ENCODE measurements at regions of chr3 and their contacts with region 1.

Region 1: DNA sequence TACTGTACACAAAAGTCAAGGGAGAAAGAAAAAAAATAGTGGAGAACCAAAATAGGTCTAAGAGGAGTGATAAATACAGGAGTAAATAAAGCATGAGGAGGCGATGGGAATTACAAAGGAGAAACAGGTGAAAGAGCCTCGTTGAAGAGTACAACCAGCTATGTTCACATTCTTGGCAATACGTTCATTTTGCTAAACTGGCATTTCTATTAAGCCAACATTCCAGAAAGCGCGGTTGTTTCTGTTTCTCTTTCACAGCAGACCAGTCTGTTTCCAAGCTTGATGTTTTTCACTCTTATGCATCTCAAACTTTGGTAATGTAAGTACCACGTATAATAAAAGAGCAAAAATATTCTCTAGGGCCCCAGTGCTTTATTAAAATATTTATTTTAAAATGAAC is 74.5 kb downstream of the NSUN3 start:
- DNase-seq: no peak
- H3K4me3 ChIP-seq: no peak overlapping the region
- H3K27ac ChIP-seq: no peak overlapping the region
- H3K27me3 ChIP-seq: no peaks in the 10 kb centered on the region
- CTCF ChIP-seq: no peak

Region 2: GRCh38 chr3:94083261-94083660 is 54.1 kb before region 1 on chr3:
- CTCF ChIA-PET with region 1: no interaction called
- POLR2A ChIA-PET with region 1: no interaction called
- DNase-seq: no peak
- H3K4me3 ChIP-seq: no peak overlapping the region
- H3K27ac ChIP-seq: no peak overlapping the region
- H3K27me3 ChIP-seq: no peaks in the 10 kb centered on the region
- CTCF ChIP-seq: no peak

Region 3: GRCh38 chr3:94206291-94206690 is 68.9 kb after region 1 on chr3:
- CTCF ChIA-PET with region 1: interaction called, 11 read pairs
- POLR2A ChIA-PET with region 1: no interaction called
- DNase-seq: no peak
- H3K4me3 ChIP-seq: no peak overlapping the region
- H3K27ac ChIP-seq: no peak overlapping the region
- H3K27me3 ChIP-seq: no peaks in the 10 kb centered on the region
- CTCF ChIP-seq: no peak

Measured in AG04450 (cell line).